Naive thymus-derived CD4-positive, alpha-beta T cell (primary cell): ENCODE measurements at regions of chr17 and their contacts with region 1.

Region 1: GRCh38 chr17:43006639-43007551 is at the start of gene IFI35:
- DNase-seq: peak; percentile 63 to 85 (median 82)
- ATAC-seq: peak; percentile 99
- H3K4me3 ChIP-seq: peak within 1 kb of the TSS; percentile 97
- H3K4me3 Mint-ChIP-seq: peak within 1 kb of the TSS; percentile 86 to 100 (median 100)
- H3K27ac ChIP-seq: peak within 1 kb of the TSS; percentile 99
- H3K27ac Mint-ChIP-seq: peak within 1 kb of the TSS; percentile 94 to 100 (median 100)
- H3K4me1 ChIP-seq: no peaks in the 10 kb centered on the region
- H3K4me1 Mint-ChIP-seq: peaks cover 6 to 25% (median 24%) of the 10 kb centered on the region in 7 donors
- H3K27me3 ChIP-seq: no peaks in the 10 kb centered on the region
- H3K27me3 Mint-ChIP-seq: no peaks in the 10 kb centered on the region
- total RNA-seq, gene IFI35: 23.5 to 145 (median 32.1) TPM

Region 2: DNA sequence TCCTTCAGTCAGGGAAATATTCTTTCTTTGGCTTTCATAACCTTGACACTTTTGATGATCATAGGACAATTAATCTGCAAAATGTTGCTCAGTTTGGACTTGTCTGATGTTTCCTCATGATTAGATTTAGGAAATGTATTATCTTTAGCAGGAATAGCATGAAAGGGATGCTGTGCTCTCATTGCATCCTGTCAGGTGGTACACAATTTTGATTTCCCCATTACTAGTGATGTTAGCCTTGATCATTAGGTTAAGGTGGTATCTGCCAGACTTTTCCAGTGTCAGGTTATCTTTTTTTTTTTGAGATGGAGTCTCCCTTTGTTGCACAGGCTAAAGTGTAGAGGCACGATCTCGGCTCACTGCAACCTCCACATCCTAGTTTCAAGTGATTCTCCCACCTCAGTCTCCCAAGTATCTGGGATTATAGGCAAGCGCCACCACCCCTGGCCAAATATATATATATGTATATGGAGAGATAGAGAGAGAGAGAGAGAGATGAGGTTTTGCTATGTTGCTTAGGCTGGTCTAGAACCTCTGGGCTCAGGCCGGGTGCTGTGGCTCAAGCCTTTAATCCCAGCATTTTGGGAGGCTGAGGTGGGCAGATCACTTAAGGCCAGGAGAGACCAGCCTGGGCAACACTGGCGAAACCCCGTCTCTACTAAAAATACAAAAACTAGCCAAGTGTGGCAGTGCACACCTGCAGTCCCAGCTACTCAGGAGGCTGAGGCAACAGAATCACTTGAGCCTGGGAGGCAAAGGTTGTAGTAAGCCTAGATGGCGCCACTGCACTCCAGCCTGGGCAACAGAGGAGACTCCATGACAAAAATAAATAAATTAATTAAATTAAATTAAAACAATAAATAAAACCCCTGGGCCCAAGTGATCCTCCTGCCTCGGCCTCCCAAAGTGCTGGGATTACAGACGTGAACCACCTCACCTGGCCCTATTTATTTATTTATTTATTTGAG is 568.0 kb before region 1 on chr17:
- CTCF ChIA-PET with region 1: no interaction called
- POLR2A ChIA-PET with region 1: no interaction called
- intact Hi-C with region 1: no loop called
- DNase-seq: peak in 6 of 9 donors; percentile 29 to 56 (median 42)
- ATAC-seq: peak; percentile 36
- H3K4me3 ChIP-seq: no peak overlapping the region
- H3K4me3 Mint-ChIP-seq: no peak overlapping the region
- H3K27ac ChIP-seq: no peak overlapping the region
- H3K27ac Mint-ChIP-seq: no peak overlapping the region
- H3K4me1 ChIP-seq: peaks cover 0 to 8% of the 10 kb centered on the region in 2 donors
- H3K4me1 Mint-ChIP-seq: peaks cover 8 to 17% (median 14%) of the 10 kb centered on the region in 7 donors
- H3K27me3 ChIP-seq: peaks cover 0 to 3% of the 10 kb centered on the region in 2 donors
- H3K27me3 Mint-ChIP-seq: peaks cover 0 to 20% (median 0%) of the 10 kb centered on the region in 5 donors

Region 3: GRCh38 chr17:42980398-42981397 is 26.2 kb before region 1 on chr17 and contains the start of gene RUNDC1:
- CTCF ChIA-PET with region 1: no interaction called
- POLR2A ChIA-PET with region 1: interaction called, 3 read pairs
- intact Hi-C with region 1: loop called in 1 of 2 experiments (anchors 1 kb)
- DNase-seq: peak; percentile 81 to 93 (median 87)
- ATAC-seq: peak; percentile 93
- H3K4me3 ChIP-seq: peak within 1 kb of the TSS; percentile 81
- H3K4me3 Mint-ChIP-seq: peak within 1 kb of the TSS; percentile 96 to 99 (median 98)
- H3K27ac ChIP-seq: peak within 1 kb of the TSS; percentile 84
- H3K27ac Mint-ChIP-seq: peak within 1 kb of the TSS; percentile 83 to 98 (median 94)
- H3K4me1 ChIP-seq: peaks cover 4 to 16% of the 10 kb centered on the region in 2 donors
- H3K4me1 Mint-ChIP-seq: peaks cover 25 to 42% (median 38%) of the 10 kb centered on the region in 7 donors
- H3K27me3 ChIP-seq: no peaks in the 10 kb centered on the region
- H3K27me3 Mint-ChIP-seq: no peaks in the 10 kb centered on the region
- total RNA-seq, gene RUNDC1: 12.2 to 21.4 (median 19.4) TPM

Region 4: DNA sequence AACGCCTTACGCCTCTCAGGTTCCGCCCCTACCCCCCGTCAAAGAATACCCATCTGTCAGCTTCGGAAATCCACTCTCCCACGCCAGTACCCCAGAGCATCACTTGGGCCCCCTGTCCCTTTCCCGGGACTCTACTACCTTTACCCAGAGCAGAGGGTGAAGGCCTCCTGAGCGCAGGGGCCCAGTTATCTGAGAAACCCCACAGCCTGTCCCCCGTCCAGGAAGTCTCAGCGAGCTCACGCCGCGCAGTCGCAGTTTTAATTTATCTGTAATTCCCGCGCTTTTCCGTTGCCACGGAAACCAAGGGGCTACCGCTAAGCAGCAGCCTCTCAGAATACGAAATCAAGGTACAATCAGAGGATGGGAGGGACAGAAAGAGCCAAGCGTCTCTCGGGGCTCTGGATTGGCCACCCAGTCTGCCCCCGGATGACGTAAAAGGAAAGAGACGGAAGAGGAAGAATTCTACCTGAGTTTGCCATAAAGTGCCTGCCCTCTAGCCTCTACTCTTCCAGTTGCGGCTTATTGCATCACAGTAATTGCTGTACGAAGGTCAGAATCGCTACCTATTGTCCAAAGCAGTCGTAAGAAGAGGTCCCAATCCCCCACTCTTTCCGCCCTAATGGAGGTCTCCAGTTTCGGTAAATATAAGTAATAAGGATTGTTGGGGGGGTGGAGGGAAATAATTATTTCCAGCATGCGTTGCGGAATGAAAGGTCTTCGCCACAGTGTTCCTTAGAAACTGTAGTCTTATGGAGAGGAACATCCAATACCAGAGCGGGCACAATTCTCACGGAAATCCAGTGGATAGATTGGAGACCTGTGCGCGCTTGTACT is 118.5 kb after region 1 on chr17 and contains the start of gene BRCA1:
- CTCF ChIA-PET with region 1: no interaction called
- POLR2A ChIA-PET with region 1: no interaction called
- intact Hi-C with region 1: loop called in 1 of 2 experiments (anchors 1 kb)
- DNase-seq: peak; percentile 78 to 98 (median 96)
- ATAC-seq: peak; percentile 100
- H3K4me3 ChIP-seq: peak within 1 kb of the TSS; percentile 83
- H3K4me3 Mint-ChIP-seq: peak within 1 kb of the TSS; percentile 88 to 97 (median 94)
- H3K27ac ChIP-seq: peak within 1 kb of the TSS; percentile 83
- H3K27ac Mint-ChIP-seq: peak within 1 kb of the TSS; percentile 88 to 98 (median 93)
- H3K4me1 ChIP-seq: peaks cover 6 to 8% of the 10 kb centered on the region in 2 donors
- H3K4me1 Mint-ChIP-seq: peaks cover 14 to 39% (median 30%) of the 10 kb centered on the region in 7 donors
- H3K27me3 ChIP-seq: no peaks in the 10 kb centered on the region
- H3K27me3 Mint-ChIP-seq: no peaks in the 10 kb centered on the region
- total RNA-seq, gene BRCA1: 2.6 to 54.1 (median 5.4) TPM

Region 5: GRCh38 chr17:43330876-43331639 is 324.2 kb after region 1 on chr17:
- CTCF ChIA-PET with region 1: interaction called, 5 read pairs
- POLR2A ChIA-PET with region 1: interaction called, 3 read pairs
- intact Hi-C with region 1: loop called in 1 of 2 experiments (anchors 1 kb)
- DNase-seq: no peak
- ATAC-seq: no peak
- H3K4me3 ChIP-seq: no peak overlapping the region
- H3K4me3 Mint-ChIP-seq: no peak overlapping the region
- H3K27ac ChIP-seq: no peak overlapping the region
- H3K27ac Mint-ChIP-seq: peak overlapping the region in 1 of 9 donors; percentile 41
- H3K4me1 ChIP-seq: peaks cover 4 to 5% of the 10 kb centered on the region in 2 donors
- H3K4me1 Mint-ChIP-seq: peaks cover 7 to 12% (median 9%) of the 10 kb centered on the region in 7 donors
- H3K27me3 ChIP-seq: no peaks in the 10 kb centered on the region
- H3K27me3 Mint-ChIP-seq: peaks cover 0 to 30% (median 16%) of the 10 kb centered on the region in 5 donors

Region 6: DNA sequence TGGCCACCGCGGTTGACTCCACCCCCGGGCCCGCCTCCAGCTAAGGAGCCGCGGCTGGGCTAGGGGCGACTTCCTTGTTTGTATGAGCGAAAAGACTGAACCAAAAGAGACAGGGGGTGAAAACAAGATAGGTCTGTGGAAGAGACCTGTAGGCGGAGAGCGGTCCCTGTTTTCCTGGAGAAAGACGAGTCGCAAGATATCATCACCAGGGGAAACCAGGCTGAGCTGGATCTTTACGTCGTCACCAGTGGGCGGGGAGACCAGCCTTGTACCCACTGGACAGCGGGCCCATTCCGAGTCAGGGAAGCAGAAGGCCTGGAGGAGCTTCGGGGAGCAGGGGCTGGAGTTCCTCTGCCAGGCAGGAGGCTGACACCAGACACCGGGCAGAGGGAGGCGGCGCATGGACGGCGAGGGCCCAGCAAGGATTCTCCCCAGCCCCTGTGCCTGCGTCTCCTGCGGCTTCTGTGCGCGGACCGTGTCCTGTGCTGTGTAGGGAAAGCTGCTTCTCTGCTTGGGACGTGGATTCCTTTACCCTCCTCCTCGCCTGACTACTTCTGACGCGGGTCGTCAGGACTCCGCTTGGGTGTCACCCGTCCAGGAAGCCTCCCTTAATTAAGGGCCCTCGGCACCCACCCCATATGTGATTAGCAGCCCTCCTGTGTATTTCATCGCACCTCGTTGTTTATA is 381.6 kb after region 1 on chr17:
- CTCF ChIA-PET with region 1: no interaction called
- POLR2A ChIA-PET with region 1: no interaction called
- intact Hi-C with region 1: loop called in 1 of 2 experiments (anchors 2 kb)
- DNase-seq: peak; percentile 92 to 98 (median 95)
- ATAC-seq: peak; percentile 84
- H3K4me3 ChIP-seq: peak overlapping the region; percentile 94
- H3K4me3 Mint-ChIP-seq: peak overlapping the region; percentile 91 to 99 (median 96)
- H3K27ac ChIP-seq: peak overlapping the region; percentile 95
- H3K27ac Mint-ChIP-seq: peak overlapping the region; percentile 95 to 100 (median 98)
- H3K4me1 ChIP-seq: peaks cover 4 to 15% of the 10 kb centered on the region in 2 donors
- H3K4me1 Mint-ChIP-seq: peaks cover 16 to 39% (median 31%) of the 10 kb centered on the region in 7 donors
- H3K27me3 ChIP-seq: no peaks in the 10 kb centered on the region
- H3K27me3 Mint-ChIP-seq: no peaks in the 10 kb centered on the region